Heart right ventricle (tissue), 16 donors: ENCODE measurements at regions of chr7 and their contacts with region 1.

Region 1: DNA sequence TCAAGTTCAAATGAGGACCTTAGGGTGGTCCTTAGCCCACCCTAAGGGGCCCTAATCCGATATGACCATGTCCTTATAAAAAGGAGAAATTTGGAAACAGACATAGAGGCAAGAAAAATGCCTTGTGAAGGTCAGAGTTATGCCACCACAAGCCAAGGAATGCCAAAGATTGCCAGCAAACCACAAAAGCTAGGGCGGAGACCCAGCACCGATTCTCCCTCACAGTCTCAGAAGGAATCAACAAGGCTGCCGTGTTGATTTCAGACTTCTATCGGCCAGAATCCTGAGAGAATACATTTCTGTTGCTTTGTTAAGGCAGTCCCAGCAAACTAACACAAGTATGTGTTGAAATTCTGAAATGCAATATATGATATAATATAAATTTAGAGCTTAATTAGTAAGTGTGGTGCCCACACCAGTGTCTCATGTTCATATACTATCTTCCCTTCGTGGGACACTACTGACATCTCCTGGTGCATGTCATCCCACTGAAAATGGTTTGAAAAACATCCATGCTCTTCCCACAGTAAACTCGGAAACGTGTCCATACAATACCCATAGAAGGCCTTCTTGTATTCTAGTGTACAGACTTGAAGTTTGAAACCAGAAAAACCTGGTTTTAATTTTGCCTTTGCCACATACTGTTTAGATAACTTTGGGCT is 349.0 kb downstream of the TNS3 start:
- DNase-seq: no peak
- ATAC-seq: peak in 3 of 8 donors; percentile 32 to 46 (median 39)
- H3K4me3 ChIP-seq: no peak overlapping the region
- H3K27ac ChIP-seq: no peak overlapping the region
- H3K4me1 ChIP-seq: peaks cover 0 to 9% (median 0%) of the 10 kb centered on the region in 9 donors
- H3K27me3 ChIP-seq: no peaks in the 10 kb centered on the region
- CTCF ChIP-seq: peak in 8 of 9 donors; percentile 11 to 55 (median 42)

Region 2: GRCh38 chr7:47100817-47101435 is 132.0 kb before region 1 on chr7:
- intact Hi-C with region 1: loop called in 1 of 10 experiments (anchors 10 kb)
- DNase-seq: peak; percentile 37 to 55
- ATAC-seq: peak in 4 of 8 donors; percentile 48 to 71 (median 59)
- H3K4me3 ChIP-seq: no peak overlapping the region
- H3K27ac ChIP-seq: no peak overlapping the region
- H3K4me1 ChIP-seq: peaks cover 0 to 3% (median 0%) of the 10 kb centered on the region in 9 donors
- H3K27me3 ChIP-seq: no peaks in the 10 kb centered on the region
- CTCF ChIP-seq: peak in 7 of 9 donors; percentile 44 to 66 (median 54)

Region 3: GRCh38 chr7:47191876-47192291 is 41.0 kb before region 1 on chr7:
- intact Hi-C with region 1: loop called in 2 of 10 experiments (anchors 5 to 10 kb)
- DNase-seq: no peak
- ATAC-seq: peak in 3 of 8 donors; percentile 22 to 23 (median 22)
- H3K4me3 ChIP-seq: no peak overlapping the region
- H3K27ac ChIP-seq: peak overlapping the region in 4 of 10 donors; percentile 8 to 60 (median 16)
- H3K4me1 ChIP-seq: peaks cover 0 to 21% (median 5%) of the 10 kb centered on the region in 9 donors
- H3K27me3 ChIP-seq: no peaks in the 10 kb centered on the region
- CTCF ChIP-seq: no peak

Region 4: DNA sequence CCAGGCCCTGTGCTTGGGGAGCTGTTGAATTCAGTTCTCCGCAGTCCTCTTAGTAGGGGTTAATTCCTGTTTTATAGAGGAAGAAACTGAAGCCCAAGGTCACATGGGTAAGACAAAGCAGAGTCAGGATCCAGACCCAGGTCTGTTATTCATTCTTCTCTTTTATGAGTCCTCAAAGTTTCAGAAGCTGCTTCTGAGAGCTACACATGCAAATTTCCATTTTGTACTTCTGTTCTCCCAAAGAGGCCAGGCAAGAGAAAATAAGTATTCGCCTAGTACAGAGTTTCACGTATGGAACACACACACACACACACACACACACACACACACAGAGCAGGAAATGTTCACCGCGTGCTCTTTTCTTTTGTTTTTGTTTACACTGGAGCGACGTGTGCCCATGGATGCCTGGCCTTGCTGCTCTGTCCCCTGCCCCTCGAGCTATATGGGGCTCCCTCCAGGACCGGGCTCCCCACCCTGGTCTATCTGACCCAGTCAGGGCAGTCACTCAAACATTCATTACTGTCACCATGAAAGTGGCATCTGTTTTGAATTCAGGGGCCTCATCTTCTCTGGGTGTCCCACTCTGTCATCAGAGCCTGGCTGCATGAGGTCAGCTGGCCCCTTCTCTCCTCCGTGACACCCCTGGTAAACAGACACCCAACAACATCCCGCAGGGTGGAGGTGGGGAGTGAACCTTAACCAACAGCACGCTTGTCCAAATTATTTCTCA is 264.6 kb after region 1 on chr7:
- intact Hi-C with region 1: no loop called
- DNase-seq: no peak
- ATAC-seq: peak in 1 of 8 donors; percentile 7
- H3K4me3 ChIP-seq: no peak overlapping the region
- H3K27ac ChIP-seq: peak overlapping the region in 4 of 10 donors; percentile 15 to 74 (median 53)
- H3K4me1 ChIP-seq: peaks cover 14 to 74% (median 51%) of the 10 kb centered on the region in 9 donors
- H3K27me3 ChIP-seq: no peaks in the 10 kb centered on the region
- CTCF ChIP-seq: no peak